Activated naive CD4-positive, alpha-beta T cell treated with anti-CD3 and anti-CD28 coated beads for 36 hours (primary cell): ENCODE measurements at regions of chr4 and their contacts with region 1.

Region 1: GRCh38 chr4:184168406-184169019 is 49.2 kb downstream of the ENPP6 start:
- DNase-seq: peak; percentile 65
- H3K4me3 Mint-ChIP-seq: no peak overlapping the region
- H3K27ac Mint-ChIP-seq: no peak overlapping the region
- H3K4me1 Mint-ChIP-seq: peaks cover 2% of the 10 kb centered on the region
- H3K27me3 Mint-ChIP-seq: peaks cover 44% of the 10 kb centered on the region

Region 2: DNA sequence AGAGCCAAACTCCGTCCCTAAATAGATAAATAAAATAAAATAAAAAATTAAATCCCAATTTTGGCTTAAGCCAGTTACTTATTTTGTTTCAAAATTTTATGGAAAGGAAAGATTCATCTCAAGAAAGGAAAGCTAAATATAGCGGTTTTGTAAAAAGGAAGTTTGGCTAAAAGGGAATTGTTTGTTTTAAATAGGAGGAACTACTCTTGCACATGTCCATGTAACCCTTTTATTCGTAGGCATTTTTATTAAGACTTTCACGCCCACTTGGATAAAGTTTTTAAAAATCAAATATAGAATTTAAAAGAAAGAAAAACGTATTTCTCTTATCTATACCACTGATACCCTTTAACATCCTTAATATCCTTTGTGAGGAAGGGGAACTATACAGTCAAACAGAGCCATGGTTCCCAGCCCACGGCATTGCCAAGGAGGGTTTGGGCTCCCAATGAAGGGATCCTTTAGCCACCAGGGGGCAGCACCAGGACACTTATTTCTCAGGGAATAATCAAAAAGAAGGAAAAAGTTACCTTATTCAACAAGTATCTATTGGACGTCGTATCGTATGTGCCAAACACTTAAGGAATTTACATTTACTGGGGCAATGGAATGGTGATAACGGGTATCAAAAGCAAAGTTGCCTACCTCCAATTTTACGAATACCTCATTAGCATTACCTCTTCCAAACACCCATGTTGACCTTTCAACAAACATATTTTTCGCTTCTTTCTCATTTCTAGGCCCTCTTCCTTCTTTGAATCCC is 696.4 kb before region 1 on chr4:
- CTCF ChIA-PET with region 1: no interaction called
- intact Hi-C with region 1: loop called (anchors 1 kb)
- DNase-seq: peak; percentile 91
- H3K4me3 Mint-ChIP-seq: no peak overlapping the region
- H3K27ac Mint-ChIP-seq: no peak overlapping the region
- H3K4me1 Mint-ChIP-seq: no peaks in the 10 kb centered on the region
- H3K27me3 Mint-ChIP-seq: no peaks in the 10 kb centered on the region

Region 3: GRCh38 chr4:183618681-183619080 is 549.8 kb before region 1 on chr4:
- CTCF ChIA-PET with region 1: no interaction called
- intact Hi-C with region 1: loop called (anchors 10 kb)
- DNase-seq: no peak
- H3K4me3 Mint-ChIP-seq: no peak overlapping the region
- H3K27ac Mint-ChIP-seq: no peak overlapping the region
- H3K4me1 Mint-ChIP-seq: no peaks in the 10 kb centered on the region
- H3K27me3 Mint-ChIP-seq: peaks cover 2% of the 10 kb centered on the region

Region 4: GRCh38 chr4:183840311-183840710 is 328.2 kb before region 1 on chr4:
- CTCF ChIA-PET with region 1: interaction called, 29 read pairs
- intact Hi-C with region 1: loop called (anchors 1 kb)
- DNase-seq: peak; percentile 81
- H3K4me3 Mint-ChIP-seq: no peak overlapping the region
- H3K27ac Mint-ChIP-seq: no peak overlapping the region
- H3K4me1 Mint-ChIP-seq: no peaks in the 10 kb centered on the region
- H3K27me3 Mint-ChIP-seq: peaks cover 12% of the 10 kb centered on the region

Region 5: GRCh38 chr4:184100297-184100885 is 68.1 kb before region 1 on chr4:
- CTCF ChIA-PET with region 1: interaction called, 3 read pairs
- intact Hi-C with region 1: loop called (anchors 5 kb)
- DNase-seq: peak; percentile 49
- H3K4me3 Mint-ChIP-seq: no peak overlapping the region
- H3K27ac Mint-ChIP-seq: no peak overlapping the region
- H3K4me1 Mint-ChIP-seq: no peaks in the 10 kb centered on the region
- H3K27me3 Mint-ChIP-seq: peaks cover 13% of the 10 kb centered on the region

Region 6: DNA sequence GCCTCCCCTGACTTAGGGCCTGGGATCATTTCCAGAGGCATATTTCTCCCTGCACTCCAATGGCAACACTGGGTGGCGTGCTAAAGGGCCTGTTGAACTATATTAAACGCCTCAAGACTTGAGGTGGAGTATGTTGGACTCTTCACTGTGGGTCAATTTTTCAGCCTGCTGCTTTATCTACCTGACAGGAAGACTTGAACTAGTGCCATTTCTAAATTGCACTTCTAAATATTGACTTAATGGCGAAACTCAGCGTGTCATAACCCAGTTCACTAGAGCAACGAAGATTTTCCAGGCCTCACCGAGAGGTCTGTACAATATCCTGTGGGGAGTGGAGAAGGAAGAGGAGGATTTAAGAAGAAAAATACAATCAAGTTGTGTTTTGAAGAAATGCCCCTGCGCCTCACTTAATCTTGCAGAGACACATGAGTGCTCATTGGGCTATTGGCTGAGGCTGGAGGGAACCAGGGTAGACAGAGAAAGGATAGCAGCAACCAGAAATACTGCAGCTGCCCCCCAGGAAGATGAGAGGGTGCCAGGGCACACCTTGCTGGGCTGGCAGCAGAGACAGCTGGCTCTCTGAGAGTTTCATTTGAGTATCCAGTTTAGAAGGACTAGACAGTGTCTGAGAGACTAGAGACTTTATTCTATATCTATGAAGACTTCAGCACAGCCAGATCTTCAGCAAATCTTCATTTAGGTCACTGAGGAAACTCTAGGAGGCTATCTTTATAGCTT is 18.2 kb before region 1 on chr4:
- CTCF ChIA-PET with region 1: interaction called, 10 read pairs
- intact Hi-C with region 1: no loop called
- DNase-seq: no peak
- H3K4me3 Mint-ChIP-seq: no peak overlapping the region
- H3K27ac Mint-ChIP-seq: no peak overlapping the region
- H3K4me1 Mint-ChIP-seq: peaks cover 6% of the 10 kb centered on the region
- H3K27me3 Mint-ChIP-seq: peaks cover 3% of the 10 kb centered on the region

Region 7: DNA sequence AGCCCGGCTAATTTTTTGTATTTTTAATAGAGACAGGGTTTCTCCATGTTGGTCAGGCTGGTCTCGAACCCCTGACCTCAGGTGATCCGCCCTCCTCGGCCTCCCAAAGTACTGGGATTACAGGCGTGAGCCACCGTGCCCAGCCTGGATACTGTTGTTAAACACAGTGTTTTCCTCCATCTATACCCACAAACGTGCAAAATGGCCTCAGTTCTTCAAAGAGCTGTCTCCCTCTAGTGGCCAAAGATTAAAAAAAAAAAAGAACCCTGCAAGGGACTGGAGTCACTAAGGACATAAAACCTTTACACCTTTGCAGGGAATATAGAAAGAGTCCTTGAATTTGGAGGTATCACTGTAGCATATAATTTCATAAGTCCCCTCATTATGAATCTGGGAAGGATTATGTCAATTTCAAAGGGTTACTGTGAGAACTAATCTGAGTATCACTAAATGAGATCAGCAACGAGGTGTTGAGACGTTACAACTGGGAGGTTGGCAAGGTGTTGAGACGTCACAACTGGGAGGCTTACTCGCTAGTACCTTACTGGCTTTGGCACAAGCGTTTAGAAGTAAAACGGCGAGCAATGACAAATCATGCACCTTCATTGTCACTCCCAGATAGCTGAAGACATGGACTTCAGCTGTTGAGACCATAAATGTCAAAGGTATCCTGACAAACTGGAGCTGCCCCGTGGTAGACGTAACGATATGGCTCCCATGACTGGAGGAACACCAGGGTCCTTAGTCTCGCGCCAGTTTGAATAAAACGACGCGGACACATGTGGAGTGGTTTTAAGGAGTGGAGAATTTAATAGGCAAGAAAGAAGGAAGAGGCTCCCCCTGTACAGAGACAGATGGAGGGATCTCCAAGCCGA is 82.5 kb after region 1 on chr4:
- CTCF ChIA-PET with region 1: interaction called, 8 read pairs
- intact Hi-C with region 1: loop called (anchors 1 kb)
- DNase-seq: peak; percentile 47
- H3K4me3 Mint-ChIP-seq: no peak overlapping the region
- H3K27ac Mint-ChIP-seq: no peak overlapping the region
- H3K4me1 Mint-ChIP-seq: peaks cover 20% of the 10 kb centered on the region
- H3K27me3 Mint-ChIP-seq: no peaks in the 10 kb centered on the region